Activated T-helper 2 cell treated with anti-CD3 and anti-CD28 coated beads, Interferon-gamma antibody, Interleukin-2, Interleukin-4, amounts not matched to agents 10 μg/mL and 5 μg/mL and 100 μg/mL, durations not matched to agents 14 hours and 24 hours and 36 hours (primary cell): ENCODE measurements at regions of chr4 and their contacts with region 1.

Region 1: GRCh38 chr4:128809477-128810330 is at the start of gene JADE1:
- DNase-seq: peak; percentile 86
- H3K4me3 Mint-ChIP-seq: peak within 1 kb of the TSS; percentile 96
- H3K27ac Mint-ChIP-seq: peak within 1 kb of the TSS; percentile 99
- H3K4me1 Mint-ChIP-seq: peaks cover 10% of the 10 kb centered on the region
- H3K27me3 Mint-ChIP-seq: no peaks in the 10 kb centered on the region
- total RNA-seq, gene JADE1: 33.6 and 37.8 TPM in 2 replicates

Region 2: GRCh38 chr4:127880764-127881562 is 928.7 kb before region 1 on chr4 and contains the start of gene PLK4:
- intact Hi-C with region 1: loop called (anchors 2 kb)
- DNase-seq: peak; percentile 97
- H3K4me3 Mint-ChIP-seq: peak within 1 kb of the TSS; percentile 93
- H3K27ac Mint-ChIP-seq: peak within 1 kb of the TSS; percentile 91
- H3K4me1 Mint-ChIP-seq: peaks cover 36% of the 10 kb centered on the region
- H3K27me3 Mint-ChIP-seq: no peaks in the 10 kb centered on the region
- total RNA-seq, gene PLK4: 47.4 and 50.1 TPM in 2 replicates

Region 3: DNA sequence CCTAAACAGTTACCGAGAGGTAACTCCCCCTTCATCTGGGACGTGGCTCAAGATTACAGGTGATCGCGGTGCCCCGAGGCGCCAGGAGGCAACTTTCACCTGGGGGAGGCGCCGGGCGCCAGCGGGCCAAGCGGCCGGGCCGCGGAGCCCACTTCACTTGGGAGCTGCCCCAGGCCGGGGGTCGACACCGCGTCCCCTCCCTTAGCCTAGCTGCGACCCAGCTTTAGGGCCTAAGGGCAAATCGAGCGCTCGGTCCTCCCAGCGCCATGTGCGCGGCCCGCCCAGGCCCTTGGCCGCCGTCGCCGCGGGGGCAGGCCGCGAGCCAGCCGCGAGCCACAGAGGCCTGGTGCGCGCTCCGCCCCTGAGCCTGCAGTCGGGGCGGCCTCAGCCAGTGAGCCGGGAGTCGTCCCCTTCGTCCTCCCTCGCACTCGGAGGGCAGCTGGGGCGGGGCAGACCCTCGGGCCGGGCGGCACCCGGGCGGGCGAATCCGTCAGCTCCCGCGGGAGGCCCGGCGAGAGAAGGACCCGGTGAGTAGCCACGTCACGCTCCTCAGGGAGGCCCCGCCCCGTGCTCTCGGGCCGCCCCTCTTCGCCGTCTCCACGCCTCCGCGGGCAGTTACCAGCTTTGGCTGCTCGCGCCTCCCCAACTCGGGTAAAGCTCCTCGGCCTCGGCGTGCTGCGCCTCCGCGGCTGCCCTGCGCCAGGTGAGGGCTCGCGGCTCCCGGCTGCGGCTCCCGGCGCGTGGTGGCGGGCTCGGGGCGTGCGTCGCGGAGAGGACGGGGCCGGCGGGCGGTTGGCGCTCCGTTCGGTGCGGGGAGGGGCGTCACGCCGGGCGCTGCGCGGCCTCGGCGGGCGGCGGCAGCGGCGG is 748.8 kb before region 1 on chr4 and contains the start of gene LARP1B:
- intact Hi-C with region 1: loop called (anchors 2 kb)
- DNase-seq: peak; percentile 93
- H3K4me3 Mint-ChIP-seq: peak within 1 kb of the TSS; percentile 90
- H3K27ac Mint-ChIP-seq: peak within 1 kb of the TSS; percentile 95
- H3K4me1 Mint-ChIP-seq: peaks cover 12% of the 10 kb centered on the region
- H3K27me3 Mint-ChIP-seq: no peaks in the 10 kb centered on the region
- total RNA-seq, gene LARP1B: 31.9 and 32.2 TPM in 2 replicates

Region 4: DNA sequence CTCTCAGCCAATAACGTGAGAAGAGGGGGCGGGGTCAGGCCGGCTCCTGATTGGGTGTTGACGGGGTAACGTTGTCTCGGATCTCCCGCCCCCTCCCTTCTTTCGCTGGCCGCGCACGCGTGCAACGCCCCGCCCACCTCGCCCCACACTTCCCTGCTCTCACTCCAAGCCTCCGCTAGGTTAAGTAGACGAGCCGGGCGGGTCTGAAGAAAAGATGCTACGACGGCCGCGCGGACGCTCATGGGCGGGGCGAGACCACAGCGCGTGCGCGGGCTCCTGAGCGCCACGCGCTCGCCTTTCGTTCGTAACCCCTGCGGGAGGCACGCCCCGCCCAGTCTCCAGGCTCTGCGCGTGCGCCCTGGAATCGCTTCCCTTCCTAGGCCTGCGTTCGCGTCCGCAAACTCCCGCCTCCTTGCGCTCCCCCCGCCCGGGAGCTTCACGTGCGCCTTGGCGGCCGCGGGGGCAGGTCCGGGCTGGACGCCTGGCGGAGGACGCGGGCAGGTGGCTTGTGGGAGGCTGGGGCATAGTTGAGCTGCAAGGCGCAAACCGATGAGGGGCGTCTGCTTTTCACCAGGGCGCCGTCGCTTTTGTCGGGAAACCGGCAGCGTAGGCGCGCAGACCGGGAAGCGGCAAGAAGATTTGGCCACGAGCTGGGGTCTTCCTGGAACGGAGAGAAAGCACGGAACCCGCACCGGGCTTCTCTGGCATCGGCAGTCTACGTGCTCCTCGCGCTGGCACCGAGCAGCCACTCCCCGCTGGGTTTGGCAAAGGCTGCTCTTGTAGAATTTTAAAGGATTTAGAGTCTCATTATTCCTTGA is 521.6 kb before region 1 on chr4:
- intact Hi-C with region 1: loop called (anchors 1 kb)
- DNase-seq: peak; percentile 97
- H3K4me3 Mint-ChIP-seq: peak overlapping the region; percentile 95
- H3K27ac Mint-ChIP-seq: peak overlapping the region; percentile 91
- H3K4me1 Mint-ChIP-seq: peaks cover 29% of the 10 kb centered on the region
- H3K27me3 Mint-ChIP-seq: no peaks in the 10 kb centered on the region

Region 5: GRCh38 chr4:128574706-128575105 is 235.0 kb before region 1 on chr4:
- intact Hi-C with region 1: loop called (anchors 5 kb)
- DNase-seq: peak; percentile 51
- H3K4me3 Mint-ChIP-seq: no peak overlapping the region
- H3K27ac Mint-ChIP-seq: no peak overlapping the region
- H3K4me1 Mint-ChIP-seq: no peaks in the 10 kb centered on the region
- H3K27me3 Mint-ChIP-seq: peaks cover 2% of the 10 kb centered on the region

Region 6: DNA sequence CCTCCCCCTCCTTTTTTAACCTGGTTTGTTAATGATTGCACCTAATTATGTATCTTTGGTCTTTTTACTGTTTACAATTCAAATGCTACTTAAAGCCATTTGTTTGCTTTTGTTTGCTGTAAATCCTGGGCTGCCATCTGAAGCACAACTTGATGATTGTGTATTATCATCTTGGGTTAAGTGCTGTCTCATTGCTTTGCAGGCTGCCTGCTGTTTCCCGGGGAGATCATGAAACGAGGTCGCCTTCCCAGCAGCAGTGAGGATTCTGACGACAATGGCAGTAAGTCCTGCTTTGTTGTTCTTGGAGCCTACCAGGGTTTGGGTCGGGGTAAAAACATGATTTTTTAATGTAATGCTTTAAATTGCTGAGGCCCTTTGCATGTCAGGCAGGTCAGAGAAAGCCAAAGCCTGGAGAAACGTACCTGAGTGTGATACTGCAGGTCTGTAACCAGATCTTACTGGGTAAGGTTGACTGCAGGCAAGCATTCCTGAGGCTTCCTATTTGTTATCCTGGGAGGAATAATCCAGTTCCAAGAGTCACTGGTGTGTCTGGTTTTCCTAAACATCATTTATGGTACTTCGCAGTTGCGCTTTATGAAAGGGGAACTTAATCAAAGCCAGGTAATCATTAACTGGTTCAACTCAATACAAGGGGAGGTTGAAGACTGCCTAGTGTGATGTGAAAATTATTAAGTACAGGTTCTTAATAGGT is 22.0 kb after region 1 on chr4:
- intact Hi-C with region 1: no loop called
- DNase-seq: no peak
- H3K4me3 Mint-ChIP-seq: no peak overlapping the region
- H3K27ac Mint-ChIP-seq: peak overlapping the region; percentile 1
- H3K4me1 Mint-ChIP-seq: peaks cover 21% of the 10 kb centered on the region
- H3K27me3 Mint-ChIP-seq: no peaks in the 10 kb centered on the region

Region 7: GRCh38 chr4:129093191-129093920 is 283.7 kb after region 1 on chr4 and contains the start of gene SCLT1:
- intact Hi-C with region 1: loop called (anchors 1 kb)
- DNase-seq: peak; percentile 95
- H3K4me3 Mint-ChIP-seq: peak within 1 kb of the TSS; percentile 37
- H3K27ac Mint-ChIP-seq: peak within 1 kb of the TSS; percentile 20
- H3K4me1 Mint-ChIP-seq: peaks cover 45% of the 10 kb centered on the region
- H3K27me3 Mint-ChIP-seq: no peaks in the 10 kb centered on the region
- total RNA-seq, gene SCLT1: 23.7 and 24.1 TPM in 2 replicates